ENCODE measurements at regions of chr17 and their contacts with region 1.

Region 1: DNA sequence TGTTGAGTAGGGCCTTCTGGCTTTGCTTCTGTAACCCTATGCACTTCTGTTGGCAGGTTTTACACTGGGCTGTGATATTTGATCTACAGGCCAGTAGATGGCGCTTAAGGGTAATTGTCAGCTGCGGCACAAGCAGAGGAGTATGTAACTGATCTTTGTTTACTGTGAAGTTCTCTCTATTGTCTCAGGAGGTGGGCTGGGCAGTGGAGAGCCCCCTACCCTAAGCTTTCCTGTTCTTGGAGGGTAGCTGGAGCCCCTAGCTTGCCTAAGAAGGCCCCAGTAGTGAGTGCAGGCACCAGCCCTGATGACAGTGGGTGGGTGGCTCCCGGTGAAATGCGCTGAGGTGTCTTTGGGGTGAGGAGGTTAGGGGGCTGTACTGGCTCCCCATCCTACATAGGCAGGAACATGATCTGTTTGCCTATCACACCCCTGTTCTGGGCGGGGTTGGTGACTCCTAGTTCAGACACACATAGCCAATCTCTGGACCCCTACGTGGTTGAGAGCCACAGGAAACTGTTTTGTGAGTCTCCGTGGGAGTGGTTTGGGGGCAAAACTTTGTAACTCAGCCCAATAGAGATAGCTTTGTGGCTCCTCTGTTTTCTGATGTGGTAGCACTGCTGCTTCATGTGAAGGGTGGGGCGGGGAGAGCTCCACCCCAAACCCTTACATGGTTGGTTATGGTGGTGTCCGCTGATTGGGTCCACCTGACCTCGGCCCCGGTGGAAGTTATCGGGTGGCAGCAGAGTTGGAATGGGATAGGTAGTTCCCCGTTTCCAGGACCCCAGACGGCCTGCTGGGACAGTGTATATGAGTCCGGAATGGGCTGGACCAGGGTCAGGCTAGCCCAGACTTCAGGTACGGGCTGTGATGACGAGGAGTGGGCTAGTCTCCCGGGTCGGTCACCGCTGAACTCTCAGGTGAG is 60.4 kb downstream of the SLFN11 start:
- DNase-seq: peak; percentile 65 to 97 (median 94)
- ATAC-seq: peak; percentile 87 to 91
- H3K4me3 Mint-ChIP-seq: peak overlapping the region; percentile 91 to 100 (median 96)
- H3K27ac Mint-ChIP-seq: peak overlapping the region; percentile 97 to 99 (median 98)
- H3K4me1 Mint-ChIP-seq: peaks cover 39 to 63% (median 54%) of the 10 kb centered on the region in 4 donors
- H3K27me3 Mint-ChIP-seq: no peaks in the 10 kb centered on the region

Region 2: DNA sequence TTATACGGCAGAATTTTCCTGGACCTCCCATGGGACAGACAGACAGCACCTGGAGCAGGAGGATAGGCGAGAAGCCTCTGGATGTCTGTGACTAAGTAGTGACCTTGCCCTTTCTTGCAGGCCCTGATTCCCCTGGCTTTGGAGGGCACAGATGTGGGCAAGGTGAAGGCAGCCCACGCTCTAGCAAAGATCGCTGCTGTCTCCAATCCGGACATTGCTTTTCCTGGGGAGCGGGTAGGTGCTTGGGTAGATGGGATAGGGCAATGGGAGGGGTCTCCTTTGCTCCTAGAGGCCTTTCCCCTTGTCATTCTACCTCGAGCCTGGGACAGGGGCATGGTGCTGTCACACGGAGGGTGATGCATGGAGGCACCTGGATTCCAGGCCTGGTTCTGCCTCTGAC is 136.2 kb before region 1 on chr17:
- POLR2A ChIA-PET with region 1: no interaction called
- DNase-seq: no peak
- ATAC-seq: no peak
- H3K4me3 Mint-ChIP-seq: peak overlapping the region in 8 of 10 donors; percentile 27 to 90 (median 75)
- H3K27ac Mint-ChIP-seq: peak overlapping the region; percentile 88 to 99 (median 93)
- H3K4me1 Mint-ChIP-seq: peaks cover 35 to 90% (median 71%) of the 10 kb centered on the region in 4 donors
- H3K27me3 Mint-ChIP-seq: peaks cover 0 to 2% (median 0%) of the 10 kb centered on the region in 5 donors

Region 3: DNA sequence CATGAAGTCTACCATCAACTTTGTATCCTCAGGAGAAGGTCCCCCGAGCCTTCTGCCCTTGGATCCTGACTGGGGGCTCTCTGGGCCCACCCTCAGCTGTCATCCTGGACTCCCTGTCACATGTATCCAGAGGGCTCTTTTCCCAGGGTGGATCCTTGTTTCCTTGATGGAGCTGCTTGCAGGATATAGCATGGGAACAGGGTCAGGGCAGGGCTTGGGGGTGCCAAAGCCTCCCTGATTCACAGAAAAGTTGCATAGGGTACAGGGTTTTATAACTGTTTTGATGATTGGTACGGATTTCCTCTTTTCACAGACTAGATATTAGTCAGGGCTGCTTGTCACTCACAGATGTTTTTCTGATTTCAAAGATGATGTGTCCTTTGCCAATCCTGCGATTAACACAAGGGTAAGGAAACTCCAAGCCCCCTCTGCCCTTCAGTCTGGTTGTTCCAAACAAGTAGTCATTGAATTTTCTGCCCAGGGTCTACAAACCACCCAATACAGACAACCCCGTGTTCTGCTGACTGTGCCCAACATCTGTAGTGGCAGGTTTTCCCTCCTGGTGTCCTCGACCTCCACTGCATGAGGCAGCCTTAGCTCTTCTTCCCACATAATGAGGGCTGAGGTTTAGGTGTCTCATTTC is 98.3 kb before region 1 on chr17:
- POLR2A ChIA-PET with region 1: interaction called, 18 read pairs
- DNase-seq: peak in 8 of 10 donors; percentile 9 to 66 (median 26)
- ATAC-seq: peak; percentile 44 to 50
- H3K4me3 Mint-ChIP-seq: peak overlapping the region; percentile 64 to 91 (median 84)
- H3K27ac Mint-ChIP-seq: peak overlapping the region; percentile 94 to 98 (median 97)
- H3K4me1 Mint-ChIP-seq: peaks cover 47 to 89% (median 88%) of the 10 kb centered on the region in 4 donors
- H3K27me3 Mint-ChIP-seq: no peaks in the 10 kb centered on the region

Region 4: GRCh38 chr17:35291802-35292201 is 21.2 kb before region 1 on chr17:
- POLR2A ChIA-PET with region 1: no interaction called
- DNase-seq: no peak
- ATAC-seq: no peak
- H3K4me3 Mint-ChIP-seq: no peak overlapping the region
- H3K27ac Mint-ChIP-seq: no peak overlapping the region
- H3K4me1 Mint-ChIP-seq: peaks cover 19 to 40% (median 31%) of the 10 kb centered on the region in 4 donors
- H3K27me3 Mint-ChIP-seq: peaks cover 0 to 2% (median 0%) of the 10 kb centered on the region in 5 donors

Region 5: GRCh38 chr17:35359398-35359797 is 46.3 kb after region 1 on chr17:
- POLR2A ChIA-PET with region 1: no interaction called
- DNase-seq: no peak
- ATAC-seq: no peak
- H3K4me3 Mint-ChIP-seq: no peak overlapping the region
- H3K27ac Mint-ChIP-seq: no peak overlapping the region
- H3K4me1 Mint-ChIP-seq: peaks cover 3 to 27% (median 17%) of the 10 kb centered on the region in 4 donors
- H3K27me3 Mint-ChIP-seq: no peaks in the 10 kb centered on the region

Region 6: DNA sequence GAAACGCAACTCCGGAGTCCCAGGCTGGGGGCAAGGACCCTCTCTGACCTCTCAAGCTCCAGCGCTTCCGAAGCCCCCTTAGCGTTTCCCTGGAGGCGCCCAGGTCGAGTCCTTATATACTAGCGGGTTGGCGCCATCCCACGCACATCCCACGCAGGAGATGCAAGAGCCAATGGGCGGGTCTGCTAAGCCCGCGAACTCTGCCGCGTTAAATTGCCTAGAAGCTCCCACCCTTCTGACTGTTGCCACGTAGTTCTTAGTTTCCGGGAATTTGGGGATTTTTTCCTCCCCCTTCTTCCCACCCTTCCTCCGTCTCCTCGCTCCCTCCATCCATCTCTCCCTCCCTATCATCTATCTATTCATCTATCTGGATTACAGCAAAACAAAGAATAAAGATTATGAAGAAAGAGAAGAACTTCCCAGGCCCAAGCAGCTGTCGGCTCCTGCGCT is 60.5 kb after region 1 on chr17 and contains the start of gene SLFN11:
- POLR2A ChIA-PET with region 1: interaction called, 12 read pairs
- DNase-seq: peak; percentile 63 to 91 (median 84)
- ATAC-seq: peak; percentile 87 to 91
- H3K4me3 Mint-ChIP-seq: peak within 1 kb of the TSS; percentile 93 to 100 (median 98)
- H3K27ac Mint-ChIP-seq: peak within 1 kb of the TSS; percentile 93 to 100 (median 98)
- H3K4me1 Mint-ChIP-seq: peaks cover 27 to 63% (median 50%) of the 10 kb centered on the region in 4 donors
- H3K27me3 Mint-ChIP-seq: no peaks in the 10 kb centered on the region
- polyA plus RNA-seq, gene SLFN11: 4.8 to 12.3 (median 4.9) TPM

Region 7: DNA sequence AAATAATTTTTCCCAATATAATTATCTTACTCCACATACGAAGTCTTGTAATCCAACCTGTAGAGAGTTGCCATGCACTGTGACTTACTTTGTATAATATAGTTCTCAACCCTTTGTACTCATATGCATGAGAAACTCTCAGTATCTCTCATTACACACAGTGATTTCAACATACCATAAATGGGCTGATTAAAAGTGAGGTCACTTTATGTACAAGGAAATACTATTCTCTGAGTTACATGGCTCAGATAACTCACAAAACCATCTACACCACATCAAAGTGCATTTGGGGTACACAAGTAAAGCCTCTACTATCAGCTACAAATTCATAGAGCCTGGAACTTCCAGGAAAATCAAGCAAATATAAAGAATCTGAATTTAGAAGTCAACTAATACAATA is 91.3 kb after region 1 on chr17:
- POLR2A ChIA-PET with region 1: no interaction called
- DNase-seq: no peak
- ATAC-seq: peak in 1 of 2 donors; percentile 44
- H3K4me3 Mint-ChIP-seq: no peak overlapping the region
- H3K27ac Mint-ChIP-seq: no peak overlapping the region
- H3K4me1 Mint-ChIP-seq: peaks cover 0 to 8% (median 6%) of the 10 kb centered on the region in 4 donors
- H3K27me3 Mint-ChIP-seq: no peaks in the 10 kb centered on the region

Region 8: GRCh38 chr17:35448214-35448898 is 135.3 kb after region 1 on chr17 and contains the start of gene SLFN13:
- POLR2A ChIA-PET with region 1: interaction called, 13 read pairs
- DNase-seq: peak; percentile 68 to 90 (median 80)
- ATAC-seq: peak; percentile 96 to 97
- H3K4me3 Mint-ChIP-seq: peak within 1 kb of the TSS; percentile 77 to 92 (median 86)
- H3K27ac Mint-ChIP-seq: peak within 1 kb of the TSS; percentile 82 to 94 (median 92)
- H3K4me1 Mint-ChIP-seq: peaks cover 2 to 28% (median 17%) of the 10 kb centered on the region in 4 donors
- H3K27me3 Mint-ChIP-seq: no peaks in the 10 kb centered on the region
- polyA plus RNA-seq, gene SLFN13: 3.2 to 9.5 (median 3.4) TPM

Region 9: GRCh38 chr17:35540589-35541404 is 227.7 kb after region 1 on chr17:
- POLR2A ChIA-PET with region 1: interaction called, 153 read pairs
- DNase-seq: peak in 3 of 10 donors; percentile 13 to 38 (median 33)
- ATAC-seq: peak; percentile 37
- H3K4me3 Mint-ChIP-seq: peak overlapping the region; percentile 70 to 98 (median 89)
- H3K27ac Mint-ChIP-seq: peak overlapping the region; percentile 80 to 100 (median 95)
- H3K4me1 Mint-ChIP-seq: peaks cover 18 to 62% (median 51%) of the 10 kb centered on the region in 4 donors
- H3K27me3 Mint-ChIP-seq: no peaks in the 10 kb centered on the region

Measured in naive thymus-derived CD8-positive, alpha-beta T cell (primary cell).